ENCODE measurements at regions of chr2 and their contacts with region 1.

Region 1: DNA sequence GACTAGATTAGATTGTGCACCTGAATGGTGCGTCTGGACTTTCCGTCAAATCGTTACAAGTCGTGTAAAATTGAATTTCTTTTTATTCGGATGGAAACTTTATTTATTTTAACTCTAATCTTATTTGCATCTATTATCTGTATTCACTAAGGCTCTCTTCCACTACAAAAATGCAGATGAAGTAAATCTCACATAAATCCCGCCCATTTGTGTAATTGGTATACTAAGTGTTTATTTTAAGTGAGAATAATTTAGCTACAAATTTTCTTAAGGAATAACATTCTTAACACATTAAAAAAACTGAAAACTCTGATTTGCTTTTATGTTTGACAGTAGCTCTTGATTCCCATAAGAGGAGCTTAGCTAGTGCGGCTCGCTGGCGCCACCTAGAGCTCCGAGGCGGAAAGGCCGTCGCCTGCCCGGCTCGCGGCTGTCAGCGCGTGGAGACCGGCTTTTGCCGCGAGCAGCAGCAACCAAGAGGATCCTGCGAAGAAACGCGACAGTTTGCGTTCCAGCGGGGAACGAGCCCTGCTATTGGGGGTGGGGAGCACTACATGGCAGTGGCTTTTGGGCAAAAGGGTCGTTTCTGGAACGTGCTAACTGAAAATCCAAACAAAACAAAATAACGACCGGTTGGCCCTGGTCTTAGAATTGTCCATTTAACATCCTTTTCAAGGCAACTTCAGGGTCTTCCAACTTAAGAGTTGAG is 6.7 kb downstream of the SP9 start:
- DNase-seq: peak; percentile 78 to 90 (median 86)
- ATAC-seq: peak; percentile 87
- H3K4me3 ChIP-seq: no peak overlapping the region
- H3K4me3 Mint-ChIP-seq: peak overlapping the region; percentile 66 to 86 (median 79)
- H3K27ac ChIP-seq: no peak overlapping the region
- H3K27ac Mint-ChIP-seq: peak overlapping the region in 8 of 9 donors; percentile 73 to 93 (median 87)
- H3K4me1 ChIP-seq: peaks cover 22 to 32% of the 10 kb centered on the region in 2 donors
- H3K4me1 Mint-ChIP-seq: peaks cover 15 to 53% (median 39%) of the 10 kb centered on the region in 7 donors
- H3K27me3 ChIP-seq: peaks cover 47 to 64% of the 10 kb centered on the region in 2 donors
- H3K27me3 Mint-ChIP-seq: peaks cover 49 to 78% (median 71%) of the 10 kb centered on the region in 5 donors

Region 2: GRCh38 chr2:172864182-172864581 is 1477.3 kb before region 1 on chr2:
- CTCF ChIA-PET with region 1: no interaction called
- POLR2A ChIA-PET with region 1: no interaction called
- intact Hi-C with region 1: loop called in 1 of 2 experiments (anchors 2 kb)
- DNase-seq: peak in 8 of 9 donors; percentile 11 to 61 (median 38)
- ATAC-seq: no peak
- H3K4me3 ChIP-seq: no peak overlapping the region
- H3K4me3 Mint-ChIP-seq: no peak overlapping the region
- H3K27ac ChIP-seq: no peak overlapping the region
- H3K27ac Mint-ChIP-seq: no peak overlapping the region
- H3K4me1 ChIP-seq: no peaks in the 10 kb centered on the region
- H3K4me1 Mint-ChIP-seq: no peaks in the 10 kb centered on the region
- H3K27me3 ChIP-seq: no peaks in the 10 kb centered on the region
- H3K27me3 Mint-ChIP-seq: peaks cover 15 to 29% (median 20%) of the 10 kb centered on the region in 5 donors

Region 3: DNA sequence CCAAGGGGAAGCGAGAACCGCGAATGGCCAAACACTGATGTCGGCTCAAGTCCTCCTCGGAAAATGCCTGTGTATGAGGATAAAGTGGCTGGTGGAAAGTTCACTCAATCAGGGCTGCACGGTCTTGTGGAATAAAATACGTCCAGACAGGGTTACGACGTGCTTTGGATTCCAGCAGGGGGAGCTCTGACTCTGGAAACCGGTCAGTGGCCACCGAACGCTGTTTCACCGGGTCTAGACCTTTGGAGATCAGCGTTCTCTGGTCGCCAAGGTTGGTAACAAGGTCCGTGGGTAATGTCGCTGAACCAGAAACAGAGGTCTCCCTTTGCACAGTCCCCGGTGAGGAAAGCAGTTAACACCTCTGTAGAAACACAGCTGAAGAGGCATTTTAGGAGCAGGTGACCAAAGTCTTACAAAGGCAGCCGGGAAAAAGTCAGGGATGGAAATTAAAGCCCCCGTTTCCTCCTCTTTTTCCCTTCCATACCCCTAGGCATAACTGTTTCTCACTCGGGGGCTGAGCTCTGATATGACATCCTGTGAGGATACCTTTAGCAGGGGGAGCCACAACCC is 939.0 kb before region 1 on chr2:
- CTCF ChIA-PET with region 1: interaction called, 58 read pairs
- POLR2A ChIA-PET with region 1: interaction called, 4 read pairs
- intact Hi-C with region 1: loop called (anchors 1 kb)
- DNase-seq: peak; percentile 40 to 74 (median 67)
- ATAC-seq: peak; percentile 87
- H3K4me3 ChIP-seq: no peak overlapping the region
- H3K4me3 Mint-ChIP-seq: peak overlapping the region in 1 of 10 donors; percentile 62
- H3K27ac ChIP-seq: no peak overlapping the region
- H3K27ac Mint-ChIP-seq: no peak overlapping the region
- H3K4me1 ChIP-seq: peaks cover 0 to 3% of the 10 kb centered on the region in 2 donors
- H3K4me1 Mint-ChIP-seq: peaks cover 0 to 12% (median 4%) of the 10 kb centered on the region in 7 donors
- H3K27me3 ChIP-seq: peaks cover 3 to 7% of the 10 kb centered on the region in 2 donors
- H3K27me3 Mint-ChIP-seq: peaks cover 55 to 73% (median 62%) of the 10 kb centered on the region in 5 donors

Region 4: GRCh38 chr2:173884025-173884802 is 457.2 kb before region 1 on chr2:
- CTCF ChIA-PET with region 1: interaction called, 7 read pairs
- POLR2A ChIA-PET with region 1: no interaction called
- intact Hi-C with region 1: loop called (anchors 1 kb)
- DNase-seq: peak in 4 of 9 donors; percentile 13 to 24 (median 18)
- ATAC-seq: peak; percentile 62
- H3K4me3 ChIP-seq: no peak overlapping the region
- H3K4me3 Mint-ChIP-seq: no peak overlapping the region
- H3K27ac ChIP-seq: no peak overlapping the region
- H3K27ac Mint-ChIP-seq: no peak overlapping the region
- H3K4me1 ChIP-seq: no peaks in the 10 kb centered on the region
- H3K4me1 Mint-ChIP-seq: peaks cover 0 to 4% (median 0%) of the 10 kb centered on the region in 7 donors
- H3K27me3 ChIP-seq: no peaks in the 10 kb centered on the region
- H3K27me3 Mint-ChIP-seq: peaks cover 15 to 32% (median 24%) of the 10 kb centered on the region in 5 donors

Region 5: DNA sequence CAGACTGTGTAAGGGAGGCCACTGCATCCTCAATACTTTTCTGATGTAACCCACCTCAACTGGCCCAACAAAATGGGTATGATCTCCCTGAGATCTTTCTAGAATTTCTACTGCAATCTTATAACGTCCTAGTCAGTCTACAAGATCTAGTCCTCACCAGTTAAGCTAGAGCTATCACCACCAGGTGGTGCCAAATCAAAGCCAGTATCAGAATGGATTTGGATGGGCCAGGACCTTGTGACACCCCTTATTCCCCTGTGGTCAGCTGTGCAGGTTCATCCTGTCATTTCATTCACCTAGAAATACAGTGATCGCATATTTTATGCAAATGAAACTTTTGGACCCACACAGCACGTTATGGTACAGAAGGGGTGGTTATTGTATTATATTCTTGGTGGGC is 183.4 kb before region 1 on chr2:
- CTCF ChIA-PET with region 1: interaction called, 7 read pairs
- POLR2A ChIA-PET with region 1: no interaction called
- intact Hi-C with region 1: loop called (anchors 1 kb)
- DNase-seq: peak in 4 of 9 donors; percentile 1 to 18 (median 10)
- ATAC-seq: peak; percentile 40
- H3K4me3 ChIP-seq: no peak overlapping the region
- H3K4me3 Mint-ChIP-seq: no peak overlapping the region
- H3K27ac ChIP-seq: no peak overlapping the region
- H3K27ac Mint-ChIP-seq: no peak overlapping the region
- H3K4me1 ChIP-seq: no peaks in the 10 kb centered on the region
- H3K4me1 Mint-ChIP-seq: peaks cover 0 to 13% (median 10%) of the 10 kb centered on the region in 7 donors
- H3K27me3 ChIP-seq: no peaks in the 10 kb centered on the region
- H3K27me3 Mint-ChIP-seq: no peaks in the 10 kb centered on the region

Region 6: DNA sequence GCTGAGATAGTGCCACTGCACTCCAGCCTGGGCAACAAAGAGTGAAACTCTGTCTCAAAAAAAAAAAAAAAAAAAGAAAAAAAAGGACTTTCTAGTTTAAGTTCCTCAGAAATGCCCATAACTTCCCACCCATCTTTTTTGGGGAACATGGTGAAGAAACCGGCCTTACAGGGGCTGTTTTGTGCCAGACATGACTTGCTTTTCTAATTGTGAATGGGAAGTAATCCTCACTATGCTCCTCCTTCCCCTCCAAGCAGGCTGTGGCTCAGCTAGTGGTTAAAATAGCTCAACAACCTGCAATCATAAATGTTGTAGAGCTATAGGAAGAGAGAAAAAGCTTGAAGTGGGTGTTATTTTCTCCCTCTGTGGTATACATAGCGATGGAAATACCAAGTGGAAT is 59.0 kb before region 1 on chr2:
- CTCF ChIA-PET with region 1: no interaction called
- POLR2A ChIA-PET with region 1: no interaction called
- intact Hi-C with region 1: no loop called
- DNase-seq: no peak
- ATAC-seq: peak; percentile 32
- H3K4me3 ChIP-seq: no peak overlapping the region
- H3K4me3 Mint-ChIP-seq: no peak overlapping the region
- H3K27ac ChIP-seq: no peak overlapping the region
- H3K27ac Mint-ChIP-seq: no peak overlapping the region
- H3K4me1 ChIP-seq: no peaks in the 10 kb centered on the region
- H3K4me1 Mint-ChIP-seq: no peaks in the 10 kb centered on the region
- H3K27me3 ChIP-seq: no peaks in the 10 kb centered on the region
- H3K27me3 Mint-ChIP-seq: peaks cover 18 to 42% (median 32%) of the 10 kb centered on the region in 5 donors

Region 7: DNA sequence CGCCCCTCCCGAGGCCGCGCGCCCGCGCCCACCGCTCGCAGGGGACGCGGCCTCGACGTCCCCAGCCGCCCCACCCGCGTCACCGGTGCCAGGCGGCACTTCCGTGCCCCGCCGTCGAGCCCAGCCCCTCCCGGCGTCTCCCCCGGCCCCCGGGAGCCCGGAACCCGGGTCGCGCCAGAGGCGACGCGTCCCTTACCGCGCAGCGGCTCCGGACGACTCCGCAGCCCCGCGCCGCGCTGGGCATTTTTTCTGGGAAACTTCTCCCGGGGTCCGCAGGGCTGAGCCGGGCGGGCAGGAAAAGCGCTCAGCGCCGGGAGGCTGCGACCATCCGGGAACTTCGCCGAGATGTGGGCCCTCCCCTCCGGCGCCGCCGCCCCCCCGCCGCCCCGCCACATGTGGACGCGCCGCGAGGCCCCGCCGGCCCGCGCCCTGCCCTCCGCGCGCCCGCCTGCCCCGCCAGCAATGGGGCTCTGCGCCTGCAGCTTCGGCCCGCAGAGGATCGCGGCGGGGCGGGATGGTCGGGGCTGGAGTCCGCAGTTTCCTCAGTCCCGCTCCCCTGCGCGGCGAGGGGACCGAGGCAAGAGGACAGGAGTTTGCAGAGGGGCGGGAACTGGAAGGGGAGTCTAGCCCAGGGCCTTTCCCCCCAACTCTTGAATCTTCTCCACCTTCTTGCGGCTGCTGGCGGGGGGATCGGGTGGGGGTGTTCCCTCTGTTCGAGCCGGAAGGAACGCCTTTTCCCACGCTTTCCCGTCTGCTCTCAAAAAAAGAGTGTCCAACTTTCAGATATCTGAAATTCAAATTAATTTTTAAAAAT is 341.3 kb after region 1 on chr2:
- CTCF ChIA-PET with region 1: no interaction called
- POLR2A ChIA-PET with region 1: no interaction called
- intact Hi-C with region 1: loop called in 1 of 2 experiments (anchors 5 kb)
- DNase-seq: peak; percentile 56 to 73 (median 71)
- ATAC-seq: peak; percentile 78
- H3K4me3 ChIP-seq: peak overlapping the region; percentile 72
- H3K4me3 Mint-ChIP-seq: peak overlapping the region; percentile 92 to 99 (median 96)
- H3K27ac ChIP-seq: peak overlapping the region; percentile 88
- H3K27ac Mint-ChIP-seq: peak overlapping the region; percentile 91 to 98 (median 96)
- H3K4me1 ChIP-seq: peaks cover 11% of the 10 kb centered on the region in 2 donors
- H3K4me1 Mint-ChIP-seq: peaks cover 34 to 69% (median 61%) of the 10 kb centered on the region in 7 donors
- H3K27me3 ChIP-seq: no peaks in the 10 kb centered on the region
- H3K27me3 Mint-ChIP-seq: no peaks in the 10 kb centered on the region

Region 8: GRCh38 chr2:176126929-176127773 is 1785.7 kb after region 1 on chr2:
- CTCF ChIA-PET with region 1: no interaction called
- POLR2A ChIA-PET with region 1: no interaction called
- intact Hi-C with region 1: loop called in 1 of 2 experiments (anchors 10 kb)
- DNase-seq: peak in 8 of 9 donors; percentile 26 to 68 (median 54)
- ATAC-seq: peak; percentile 51
- H3K4me3 ChIP-seq: no peak overlapping the region
- H3K4me3 Mint-ChIP-seq: peak overlapping the region in 4 of 10 donors; percentile 17 to 67 (median 38)
- H3K27ac ChIP-seq: no peak overlapping the region
- H3K27ac Mint-ChIP-seq: peak overlapping the region in 3 of 9 donors; percentile 8 to 63 (median 62)
- H3K4me1 ChIP-seq: peaks cover 3 to 20% of the 10 kb centered on the region in 2 donors
- H3K4me1 Mint-ChIP-seq: peaks cover 17 to 51% (median 41%) of the 10 kb centered on the region in 7 donors
- H3K27me3 ChIP-seq: peaks cover 33 to 74% of the 10 kb centered on the region in 2 donors
- H3K27me3 Mint-ChIP-seq: peaks cover 71 to 80% (median 76%) of the 10 kb centered on the region in 5 donors

Measured in naive thymus-derived CD4-positive, alpha-beta T cell (primary cell).